IMR-90 (cell line): ENCODE measurements at regions of chr21 and their contacts with region 1.

Region 1: GRCh38 chr21:29849735-29850176 is 90.0 kb downstream of the GRIK1 start:
- DNase-seq: peak; percentile 57
- ATAC-seq: peak; percentile 100
- H3K4me3 ChIP-seq: no peak overlapping the region
- H3K27ac ChIP-seq: no peak overlapping the region
- H3K4me1 ChIP-seq: no peaks in the 10 kb centered on the region
- H3K27me3 ChIP-seq: no peaks in the 10 kb centered on the region; the same call in none of the 2 replicates
- CTCF ChIP-seq: peak; percentile 78
- POLR2A ChIP-seq: 0 out of 2 replicates have a peak, but pooled peaks have one; percentile 22
- RAD21 ChIP-seq: peak; percentile 88

Region 2: DNA sequence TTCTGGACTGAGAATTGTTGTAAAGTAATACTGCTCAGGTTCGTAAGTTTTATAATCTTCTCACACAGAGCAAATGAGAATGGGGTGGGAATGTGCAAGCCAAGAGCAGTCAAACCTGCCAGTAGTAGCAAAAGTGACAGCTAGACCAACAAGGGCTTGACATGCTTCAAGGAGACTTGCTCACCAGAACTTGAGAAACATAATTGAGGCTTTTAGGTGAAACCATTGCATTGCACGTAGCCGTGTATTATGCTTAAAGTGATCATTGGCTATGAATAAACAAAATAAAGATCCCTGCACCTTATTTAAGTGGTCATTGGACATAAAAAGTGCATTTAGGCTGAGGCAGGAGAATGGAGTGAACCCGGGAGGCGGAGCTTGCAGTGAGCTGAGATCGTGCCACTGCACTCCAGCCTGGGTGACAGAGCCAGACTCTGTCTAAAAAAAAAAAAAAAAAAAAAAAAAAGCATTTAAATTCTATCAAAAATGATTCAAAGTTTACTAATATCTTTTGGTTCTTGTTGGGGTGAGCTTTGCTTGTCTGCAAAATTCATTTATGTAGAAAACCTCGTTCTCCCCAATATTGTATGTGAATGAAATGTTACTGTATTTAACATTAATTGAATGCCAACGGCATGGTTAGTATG is 764.5 kb before region 1 on chr21:
- CTCF ChIA-PET with region 1: no interaction called
- POLR2A ChIA-PET with region 1: no interaction called
- dilution Hi-C with region 1: no loop called
- in situ Hi-C with region 1: loop called (anchors 5 kb)
- intact Hi-C with region 1: loop called (anchors 1 kb)
- DNase-seq: no peak
- ATAC-seq: no peak
- H3K4me3 ChIP-seq: no peak overlapping the region
- H3K27ac ChIP-seq: no peak overlapping the region
- H3K4me1 ChIP-seq: peaks cover 5% of the 10 kb centered on the region
- H3K27me3 ChIP-seq: no peaks in the 10 kb centered on the region
- CTCF ChIP-seq: no peak
- POLR2A ChIP-seq: no peak
- RAD21 ChIP-seq: no peak

Region 3: DNA sequence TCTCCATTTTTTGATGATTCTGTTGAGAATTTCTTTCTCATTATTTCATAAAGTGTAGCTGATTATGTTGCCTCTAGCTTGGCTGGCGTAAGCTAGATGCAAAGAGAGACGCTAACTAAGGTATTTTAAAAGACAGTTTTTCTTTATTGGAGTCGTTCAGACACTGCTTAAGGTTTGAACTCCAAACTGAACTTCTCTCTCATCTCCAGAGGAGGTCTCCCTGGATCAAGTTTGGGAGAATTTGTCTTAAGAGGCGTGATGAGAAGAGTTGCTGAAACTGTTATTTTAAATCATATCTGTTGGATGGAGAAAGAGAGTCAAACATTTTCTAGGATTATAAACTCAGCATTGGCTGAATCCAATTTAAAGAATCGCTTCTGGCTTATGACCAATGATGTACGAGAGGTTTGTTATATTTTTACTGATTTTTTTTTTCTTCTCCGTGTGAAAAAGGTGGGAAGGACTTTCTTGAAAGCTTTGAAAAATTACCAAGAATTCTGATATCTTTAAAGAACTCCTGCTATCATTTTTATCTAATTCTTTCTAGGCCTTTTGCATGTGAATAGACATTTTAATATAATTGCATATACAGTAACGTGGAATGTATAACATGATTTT is 685.3 kb before region 1 on chr21:
- CTCF ChIA-PET with region 1: no interaction called
- POLR2A ChIA-PET with region 1: no interaction called
- dilution Hi-C with region 1: no loop called
- in situ Hi-C with region 1: no loop called
- intact Hi-C with region 1: loop called (anchors 1 kb)
- DNase-seq: peak; percentile 91
- ATAC-seq: peak; percentile 79
- H3K4me3 ChIP-seq: no peak overlapping the region
- H3K27ac ChIP-seq: no peak overlapping the region
- H3K4me1 ChIP-seq: peaks cover 5% of the 10 kb centered on the region; the same call in 1 of the 2 replicates
- H3K27me3 ChIP-seq: no peaks in the 10 kb centered on the region
- CTCF ChIP-seq: peak; percentile 90
- POLR2A ChIP-seq: 0 out of 2 replicates have a peak, but pooled peaks have one; percentile 34
- RAD21 ChIP-seq: peak; percentile 97

Region 4: GRCh38 chr21:29372063-29372802 is 477.5 kb before region 1 on chr21:
- CTCF ChIA-PET with region 1: no interaction called
- POLR2A ChIA-PET with region 1: no interaction called
- dilution Hi-C with region 1: no loop called
- in situ Hi-C with region 1: no loop called
- intact Hi-C with region 1: loop called (anchors 2 kb)
- DNase-seq: peak; percentile 84
- ATAC-seq: peak; percentile 94
- H3K4me3 ChIP-seq: no peak overlapping the region
- H3K27ac ChIP-seq: no peak overlapping the region
- H3K4me1 ChIP-seq: peaks cover 2% of the 10 kb centered on the region; the same call in 1 of the 2 replicates
- H3K27me3 ChIP-seq: no peaks in the 10 kb centered on the region
- CTCF ChIP-seq: peak; percentile 82
- POLR2A ChIP-seq: no peak
- RAD21 ChIP-seq: peak; percentile 93

Region 5: GRCh38 chr21:29433366-29434059 is 416.2 kb before region 1 on chr21:
- CTCF ChIA-PET with region 1: no interaction called
- POLR2A ChIA-PET with region 1: no interaction called
- dilution Hi-C with region 1: no loop called
- in situ Hi-C with region 1: no loop called
- intact Hi-C with region 1: loop called (anchors 1 kb)
- DNase-seq: peak; percentile 71
- ATAC-seq: peak; percentile 88
- H3K4me3 ChIP-seq: no peak overlapping the region
- H3K27ac ChIP-seq: peak overlapping the region; percentile 48; the same call in 1 of the 2 replicates
- H3K4me1 ChIP-seq: peaks cover 14% of the 10 kb centered on the region
- H3K27me3 ChIP-seq: no peaks in the 10 kb centered on the region
- CTCF ChIP-seq: no peak
- POLR2A ChIP-seq: no peak
- RAD21 ChIP-seq: no peak

Region 6: DNA sequence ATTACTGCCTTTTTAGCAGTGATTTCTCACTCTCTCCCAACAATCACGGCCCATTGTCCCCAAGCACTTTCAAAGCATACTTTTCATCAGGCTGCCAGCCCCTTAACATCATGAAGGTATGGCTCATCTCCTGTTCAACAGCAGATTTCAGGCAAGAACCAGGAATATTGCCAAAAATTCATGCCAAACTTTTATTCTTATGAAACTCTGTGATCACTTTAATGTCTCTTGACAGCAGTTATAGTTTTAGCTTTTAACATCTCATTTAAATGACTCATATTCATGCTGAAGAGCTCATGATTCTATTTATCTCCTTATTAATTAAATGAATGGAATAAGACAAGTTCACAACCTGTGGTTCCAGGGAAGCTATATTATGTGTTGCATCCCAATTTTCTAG is 145.0 kb before region 1 on chr21:
- CTCF ChIA-PET with region 1: no interaction called
- POLR2A ChIA-PET with region 1: no interaction called
- dilution Hi-C with region 1: no loop called
- in situ Hi-C with region 1: no loop called
- intact Hi-C with region 1: no loop called
- DNase-seq: peak; percentile 6
- ATAC-seq: no peak
- H3K4me3 ChIP-seq: no peak overlapping the region
- H3K27ac ChIP-seq: no peak overlapping the region
- H3K4me1 ChIP-seq: no peaks in the 10 kb centered on the region
- H3K27me3 ChIP-seq: no peaks in the 10 kb centered on the region
- CTCF ChIP-seq: no peak
- POLR2A ChIP-seq: no peak
- RAD21 ChIP-seq: no peak